ENCODE measurements at regions of chr1 and their contacts with region 1.

Region 1: GRCh38 chr1:116826818-116827606 is 72.8 kb downstream of the CD2 start:
- DNase-seq: peak; percentile 87
- ATAC-seq: peak; percentile 90
- H3K4me3 Mint-ChIP-seq: peak overlapping the region; percentile 77
- H3K27ac Mint-ChIP-seq: peak overlapping the region; percentile 97
- H3K4me1 Mint-ChIP-seq: peaks cover 69% of the 10 kb centered on the region
- H3K27me3 Mint-ChIP-seq: no peaks in the 10 kb centered on the region

Region 2: GRCh38 chr1:116514708-116515525 is 312.1 kb before region 1 on chr1:
- CTCF ChIA-PET with region 1: no interaction called
- POLR2A ChIA-PET with region 1: no interaction called
- intact Hi-C with region 1: loop called in 1 of 2 experiments (anchors 2 kb)
- DNase-seq: peak; percentile 78
- ATAC-seq: peak; percentile 94
- H3K4me3 Mint-ChIP-seq: peak overlapping the region; percentile 39
- H3K27ac Mint-ChIP-seq: peak overlapping the region; percentile 85
- H3K4me1 Mint-ChIP-seq: peaks cover 56% of the 10 kb centered on the region
- H3K27me3 Mint-ChIP-seq: no peaks in the 10 kb centered on the region

Region 3: DNA sequence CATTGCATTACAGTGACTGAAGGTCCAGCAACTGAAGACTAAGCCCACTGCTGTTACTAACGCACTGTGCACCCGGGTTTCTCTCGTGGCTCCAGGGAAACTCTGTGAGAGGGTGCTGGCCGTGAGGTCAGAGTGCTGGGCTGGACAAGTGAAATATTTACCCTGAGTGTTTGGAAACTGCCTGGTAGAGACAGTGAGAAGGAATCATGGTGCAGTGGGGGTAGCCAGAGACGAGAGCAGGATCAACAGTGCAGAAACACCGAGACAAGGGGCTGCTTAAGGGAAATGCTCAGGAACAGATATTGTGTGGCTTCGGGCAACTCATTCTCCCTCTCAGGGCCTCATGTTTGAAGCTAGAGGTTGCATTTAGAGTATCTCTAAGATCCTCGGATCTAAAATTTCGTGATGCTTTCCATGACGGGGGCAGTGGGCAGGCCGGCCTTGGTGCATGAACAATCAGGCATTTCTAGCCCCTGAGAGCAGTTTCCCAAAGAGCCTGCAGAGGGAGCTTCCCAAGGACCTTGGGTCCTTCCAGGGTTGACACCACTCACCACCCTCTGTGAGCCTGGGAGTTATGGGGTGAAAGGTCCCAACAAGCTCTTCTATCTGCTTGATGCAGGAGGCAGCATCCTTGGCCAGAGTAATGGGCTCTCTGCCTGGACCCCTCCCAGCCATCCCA is 63.1 kb before region 1 on chr1:
- CTCF ChIA-PET with region 1: interaction called, 30 read pairs
- POLR2A ChIA-PET with region 1: interaction called, 77 read pairs
- intact Hi-C with region 1: loop called (anchors 1 kb)
- DNase-seq: peak; percentile 83
- ATAC-seq: peak; percentile 6
- H3K4me3 Mint-ChIP-seq: peak overlapping the region; percentile 93
- H3K27ac Mint-ChIP-seq: peak overlapping the region; percentile 100
- H3K4me1 Mint-ChIP-seq: peaks cover 92% of the 10 kb centered on the region
- H3K27me3 Mint-ChIP-seq: no peaks in the 10 kb centered on the region

Region 4: DNA sequence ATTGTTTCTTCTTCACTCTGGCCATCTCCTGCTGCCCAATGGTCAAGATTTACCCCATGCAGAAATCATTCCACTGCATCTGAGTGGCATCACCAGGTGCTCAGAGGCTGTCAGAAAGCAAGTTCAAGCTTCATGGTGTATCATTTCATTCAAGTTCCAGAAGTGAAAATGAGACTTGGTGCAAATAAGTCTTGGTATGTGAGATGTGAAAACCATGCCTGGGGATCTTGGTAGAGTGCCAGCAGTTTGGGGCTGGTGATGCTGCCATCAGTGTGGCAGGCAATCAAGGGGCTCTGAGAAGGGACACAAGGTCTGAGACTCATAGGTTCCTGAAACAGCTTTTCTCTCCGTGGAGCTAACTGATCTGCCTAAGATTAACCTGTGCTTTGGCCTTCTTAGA is 20.8 kb before region 1 on chr1:
- CTCF ChIA-PET with region 1: interaction called, 6 read pairs
- POLR2A ChIA-PET with region 1: interaction called, 13 read pairs
- intact Hi-C with region 1: no loop called
- DNase-seq: peak; percentile 92
- ATAC-seq: peak; percentile 68
- H3K4me3 Mint-ChIP-seq: peak overlapping the region; percentile 85
- H3K27ac Mint-ChIP-seq: peak overlapping the region; percentile 94
- H3K4me1 Mint-ChIP-seq: peaks cover 85% of the 10 kb centered on the region
- H3K27me3 Mint-ChIP-seq: no peaks in the 10 kb centered on the region

Region 5: DNA sequence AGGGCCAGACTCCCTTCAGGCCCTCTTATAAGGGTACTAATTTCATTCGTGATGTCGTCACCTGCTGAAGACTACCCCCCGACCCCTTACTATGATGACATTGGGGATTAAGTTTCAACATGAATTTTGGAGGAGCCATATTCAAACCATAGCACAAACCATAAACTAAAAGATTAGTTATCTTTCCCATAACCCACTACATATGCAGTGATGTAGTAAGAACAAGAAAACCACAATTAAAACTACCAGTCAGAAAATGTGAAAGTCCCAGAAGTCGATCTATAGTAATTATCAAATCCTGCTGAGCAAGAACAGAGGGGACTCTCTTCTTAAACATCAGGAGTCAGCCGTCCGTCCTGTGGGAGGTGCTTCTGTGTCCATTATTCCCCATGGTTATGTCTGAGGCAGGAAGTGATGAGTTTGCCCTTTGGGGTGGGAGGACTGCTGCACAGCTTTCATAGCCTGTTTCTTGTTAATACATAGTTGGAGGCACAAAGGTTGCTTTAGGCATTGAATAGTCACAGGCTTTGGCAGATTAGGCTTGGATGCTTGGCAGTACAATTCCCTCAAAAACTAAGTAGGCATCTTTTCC is 46.8 kb after region 1 on chr1:
- CTCF ChIA-PET with region 1: interaction called, 3 read pairs
- POLR2A ChIA-PET with region 1: no interaction called
- intact Hi-C with region 1: loop called in 1 of 2 experiments (anchors 2 kb)
- DNase-seq: peak; percentile 52
- ATAC-seq: peak; percentile 73
- H3K4me3 Mint-ChIP-seq: no peak overlapping the region
- H3K27ac Mint-ChIP-seq: peak overlapping the region; percentile 5
- H3K4me1 Mint-ChIP-seq: peaks cover 33% of the 10 kb centered on the region
- H3K27me3 Mint-ChIP-seq: no peaks in the 10 kb centered on the region

Region 6: GRCh38 chr1:117301901-117302300 is 474.9 kb after region 1 on chr1:
- CTCF ChIA-PET with region 1: no interaction called
- POLR2A ChIA-PET with region 1: no interaction called
- intact Hi-C with region 1: no loop called
- DNase-seq: no peak
- ATAC-seq: no peak
- H3K4me3 Mint-ChIP-seq: no peak overlapping the region
- H3K27ac Mint-ChIP-seq: no peak overlapping the region
- H3K4me1 Mint-ChIP-seq: no peaks in the 10 kb centered on the region
- H3K27me3 Mint-ChIP-seq: no peaks in the 10 kb centered on the region